Transverse colon (tissue), 4 donors: ENCODE measurements at regions of chr5 and their contacts with region 1.

Region 1: DNA sequence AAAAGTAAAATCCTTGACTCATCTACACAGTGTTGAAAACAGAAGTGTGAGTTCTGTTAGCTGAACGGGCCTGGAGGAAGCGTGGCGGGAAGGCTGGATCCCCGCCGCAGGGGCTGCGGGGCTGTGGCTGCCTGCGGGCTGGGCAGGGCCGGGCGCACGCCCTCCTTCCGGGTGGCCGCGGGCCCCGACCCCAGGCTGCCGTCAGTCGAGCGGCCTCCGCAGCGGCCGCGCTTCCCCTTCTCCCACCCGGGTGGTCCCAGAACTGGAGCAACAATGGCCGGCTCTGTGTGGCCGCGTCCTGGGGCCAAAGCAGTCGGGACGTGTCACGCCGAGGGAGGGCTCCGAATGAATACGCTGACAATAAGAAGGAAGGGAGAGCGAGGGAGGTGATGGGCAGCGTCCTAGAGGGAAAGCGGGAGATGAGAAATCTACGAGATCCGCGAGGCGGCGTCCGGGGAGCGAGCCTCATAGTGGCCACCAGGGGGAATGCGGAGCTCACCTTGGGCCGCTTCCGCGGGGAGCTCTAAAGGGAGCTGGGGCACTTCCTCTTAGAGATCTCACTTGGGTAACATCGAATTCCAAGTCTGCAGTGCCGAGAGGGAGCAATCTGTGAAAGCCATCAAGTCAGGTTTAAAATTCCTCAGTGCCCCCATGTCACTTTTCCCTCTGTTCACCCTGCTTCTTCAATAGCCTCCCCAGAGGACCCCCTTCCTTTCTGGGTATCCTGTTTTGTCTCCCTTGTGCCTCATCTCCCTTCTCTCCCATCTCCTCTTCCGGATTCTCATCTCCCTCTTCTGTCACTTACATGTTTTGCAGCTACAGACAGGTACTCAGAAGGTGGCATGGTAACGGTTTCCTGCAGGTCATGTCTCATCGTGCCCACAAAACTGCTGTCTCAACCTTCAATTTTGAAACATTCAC is 83.9 kb downstream of the SLC1A3 start:
- DNase-seq: peak; percentile 79
- H3K4me3 ChIP-seq: peak overlapping the region; percentile 18 to 64 (median 44)
- H3K27ac ChIP-seq: peak overlapping the region; percentile 33 to 72 (median 70)
- H3K4me1 ChIP-seq: peaks cover 0 to 11% (median 7%) of the 10 kb centered on the region in 4 donors
- H3K27me3 ChIP-seq: no peaks in the 10 kb centered on the region
- CTCF ChIP-seq: peak; percentile 76 to 87 (median 82)
- EP300 ChIP-seq: no peak
- POLR2A ChIP-seq: no peak

Region 2: GRCh38 chr5:36252722-36253365 is 437.5 kb before region 1 on chr5:
- in situ Hi-C with region 1: loop called in 1 of 4 experiments (anchors 25 kb)
- intact Hi-C with region 1: no loop called
- DNase-seq: no peak
- H3K4me3 ChIP-seq: no peak overlapping the region
- H3K27ac ChIP-seq: peak overlapping the region in 2 of 4 donors; percentile 32 to 40
- H3K4me1 ChIP-seq: no peaks in the 10 kb centered on the region
- H3K27me3 ChIP-seq: no peaks in the 10 kb centered on the region
- CTCF ChIP-seq: no peak
- EP300 ChIP-seq: no peak
- POLR2A ChIP-seq: no peak